IMR-90 (cell line): ENCODE measurements at regions of chr7 and their contacts with region 1.

Region 1: GRCh38 chr7:23273141-23273599 is 26.0 kb upstream of the MALSU1 start:
- DNase-seq: peak; percentile 96
- ATAC-seq: peak; percentile 92
- H3K4me3 ChIP-seq: no peak overlapping the region
- H3K27ac ChIP-seq: no peak overlapping the region
- H3K4me1 ChIP-seq: peaks cover 2% of the 10 kb centered on the region; the same call in 1 of the 2 replicates
- H3K27me3 ChIP-seq: peaks cover 17% of the 10 kb centered on the region
- CTCF ChIP-seq: peak; percentile 86
- POLR2A ChIP-seq: no peak
- RAD21 ChIP-seq: peak; percentile 80

Region 2: GRCh38 chr7:23175938-23176337 is 97.2 kb before region 1 on chr7:
- CTCF ChIA-PET with region 1: no interaction called
- POLR2A ChIA-PET with region 1: no interaction called
- dilution Hi-C with region 1: no loop called
- in situ Hi-C with region 1: no loop called
- intact Hi-C with region 1: no loop called
- DNase-seq: no peak
- ATAC-seq: no peak
- H3K4me3 ChIP-seq: no peak overlapping the region
- H3K27ac ChIP-seq: no peak overlapping the region
- H3K4me1 ChIP-seq: no peaks in the 10 kb centered on the region
- H3K27me3 ChIP-seq: no peaks in the 10 kb centered on the region
- CTCF ChIP-seq: no peak
- POLR2A ChIP-seq: no peak
- RAD21 ChIP-seq: no peak

Region 3: GRCh38 chr7:23234569-23235296 is 38.4 kb before region 1 on chr7:
- CTCF ChIA-PET with region 1: no interaction called
- POLR2A ChIA-PET with region 1: no interaction called
- dilution Hi-C with region 1: no loop called
- in situ Hi-C with region 1: no loop called
- intact Hi-C with region 1: no loop called
- DNase-seq: no peak
- ATAC-seq: no peak
- H3K4me3 ChIP-seq: no peak overlapping the region
- H3K27ac ChIP-seq: no peak overlapping the region
- H3K4me1 ChIP-seq: no peaks in the 10 kb centered on the region
- H3K27me3 ChIP-seq: peaks cover 5% of the 10 kb centered on the region
- CTCF ChIP-seq: no peak
- POLR2A ChIP-seq: no peak
- RAD21 ChIP-seq: no peak

Region 4: DNA sequence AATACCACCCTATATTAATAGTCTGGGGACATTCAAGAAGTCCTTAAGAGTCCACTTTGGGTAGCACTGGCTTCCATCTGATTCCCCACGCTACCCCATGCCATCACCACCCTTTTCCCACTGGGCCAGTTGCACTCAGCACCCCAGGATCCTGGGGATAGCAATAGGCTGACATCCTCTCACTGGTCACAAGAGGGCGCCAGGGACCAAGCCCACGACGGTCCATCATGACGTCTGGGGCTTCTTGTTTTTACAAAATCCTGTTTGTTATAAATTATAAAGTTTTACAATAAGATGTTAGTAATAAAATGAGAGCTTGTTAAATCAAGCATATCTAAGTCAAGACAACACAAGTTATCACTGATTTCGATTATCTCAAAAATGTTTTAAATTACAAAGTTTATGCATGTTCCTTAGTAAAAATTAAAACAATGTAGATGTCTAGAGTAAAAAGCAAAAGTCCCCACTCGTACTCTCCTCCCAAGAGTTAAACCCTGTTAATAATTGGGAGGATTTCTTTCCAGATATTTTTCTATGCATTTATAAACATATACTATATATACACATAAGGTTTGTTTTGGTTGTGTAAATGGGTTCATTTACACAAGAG is 11.2 kb before region 1 on chr7:
- CTCF ChIA-PET with region 1: interaction called, 34 read pairs
- POLR2A ChIA-PET with region 1: no interaction called
- dilution Hi-C with region 1: no loop called
- in situ Hi-C with region 1: no loop called
- intact Hi-C with region 1: no loop called
- DNase-seq: peak; percentile 67
- ATAC-seq: peak; percentile 100
- H3K4me3 ChIP-seq: no peak overlapping the region
- H3K27ac ChIP-seq: no peak overlapping the region
- H3K4me1 ChIP-seq: no peaks in the 10 kb centered on the region
- H3K27me3 ChIP-seq: peaks cover 15% of the 10 kb centered on the region
- CTCF ChIP-seq: peak; percentile 85
- POLR2A ChIP-seq: no peak
- RAD21 ChIP-seq: peak; percentile 85

Region 5: GRCh38 chr7:23462846-23463245 is 189.7 kb after region 1 on chr7:
- CTCF ChIA-PET with region 1: interaction called, 11 read pairs
- POLR2A ChIA-PET with region 1: no interaction called
- dilution Hi-C with region 1: no loop called
- in situ Hi-C with region 1: no loop called
- intact Hi-C with region 1: no loop called
- DNase-seq: peak; percentile 67
- ATAC-seq: peak; percentile 24; the same call in 1 of the 2 replicates
- H3K4me3 ChIP-seq: no peak overlapping the region
- H3K27ac ChIP-seq: no peak overlapping the region
- H3K4me1 ChIP-seq: peaks cover 13% of the 10 kb centered on the region
- H3K27me3 ChIP-seq: no peaks in the 10 kb centered on the region
- CTCF ChIP-seq: peak; percentile 50
- POLR2A ChIP-seq: no peak
- RAD21 ChIP-seq: peak; percentile 66

Region 6: GRCh38 chr7:23514755-23515154 is 241.6 kb after region 1 on chr7:
- CTCF ChIA-PET with region 1: no interaction called
- POLR2A ChIA-PET with region 1: no interaction called
- dilution Hi-C with region 1: no loop called
- in situ Hi-C with region 1: no loop called
- intact Hi-C with region 1: no loop called
- DNase-seq: no peak
- ATAC-seq: no peak
- H3K4me3 ChIP-seq: no peak overlapping the region
- H3K27ac ChIP-seq: no peak overlapping the region
- H3K4me1 ChIP-seq: no peaks in the 10 kb centered on the region
- H3K27me3 ChIP-seq: no peaks in the 10 kb centered on the region
- CTCF ChIP-seq: no peak
- POLR2A ChIP-seq: no peak
- RAD21 ChIP-seq: no peak

Region 7: GRCh38 chr7:23546897-23547572 is 273.9 kb after region 1 on chr7:
- CTCF ChIA-PET with region 1: interaction called, 8 read pairs
- POLR2A ChIA-PET with region 1: no interaction called
- dilution Hi-C with region 1: no loop called
- in situ Hi-C with region 1: no loop called
- intact Hi-C with region 1: loop called (anchors 2 kb)
- DNase-seq: peak; percentile 91
- ATAC-seq: peak; percentile 96
- H3K4me3 ChIP-seq: no peak overlapping the region
- H3K27ac ChIP-seq: no peak overlapping the region
- H3K4me1 ChIP-seq: no peaks in the 10 kb centered on the region
- H3K27me3 ChIP-seq: peaks cover 2% of the 10 kb centered on the region; the same call in 1 of the 2 replicates
- CTCF ChIP-seq: peak; percentile 98
- POLR2A ChIP-seq: no peak
- RAD21 ChIP-seq: peak; percentile 87

Region 8: GRCh38 chr7:23712368-23713284 is 439.5 kb after region 1 on chr7:
- CTCF ChIA-PET with region 1: interaction called, 3 read pairs
- POLR2A ChIA-PET with region 1: no interaction called
- dilution Hi-C with region 1: no loop called
- in situ Hi-C with region 1: loop called (anchors 10 kb)
- intact Hi-C with region 1: loop called (anchors 1 kb)
- DNase-seq: peak; percentile 78
- ATAC-seq: peak; percentile 24; the same call in 1 of the 2 replicates
- H3K4me3 ChIP-seq: no peak overlapping the region
- H3K27ac ChIP-seq: no peak overlapping the region
- H3K4me1 ChIP-seq: peaks cover 2% of the 10 kb centered on the region; the same call in 1 of the 2 replicates
- H3K27me3 ChIP-seq: no peaks in the 10 kb centered on the region
- CTCF ChIP-seq: peak; percentile 87
- POLR2A ChIP-seq: no peak
- RAD21 ChIP-seq: peak; percentile 92